CD4-positive, alpha-beta T cell (primary cell): ENCODE measurements at regions of chr2 and their contacts with region 1.

Region 1: GRCh38 chr2:151520976-151521375 is 111.3 kb downstream of the RIF1 start:
- DNase-seq: no peak
- ATAC-seq: no peak
- H3K4me3 ChIP-seq: no peak overlapping the region
- H3K4me3 Mint-ChIP-seq: no peak overlapping the region
- H3K27ac ChIP-seq: no peak overlapping the region
- H3K27ac Mint-ChIP-seq: no peak overlapping the region
- H3K4me1 ChIP-seq: no peaks in the 10 kb centered on the region
- H3K4me1 Mint-ChIP-seq: no peaks in the 10 kb centered on the region
- H3K27me3 ChIP-seq: no peaks in the 10 kb centered on the region
- H3K27me3 Mint-ChIP-seq: no peaks in the 10 kb centered on the region
- CTCF ChIP-seq: no peak

Region 2: GRCh38 chr2:151544449-151544848 is 23.5 kb after region 1 on chr2:
- CTCF ChIA-PET with region 1: no interaction called
- POLR2A ChIA-PET with region 1: no interaction called
- intact Hi-C with region 1: loop called in 1 of 2 experiments (anchors 1 kb)
- DNase-seq: no peak
- ATAC-seq: no peak
- H3K4me3 ChIP-seq: no peak overlapping the region
- H3K4me3 Mint-ChIP-seq: no peak overlapping the region
- H3K27ac ChIP-seq: no peak overlapping the region
- H3K27ac Mint-ChIP-seq: no peak overlapping the region
- H3K4me1 ChIP-seq: no peaks in the 10 kb centered on the region
- H3K4me1 Mint-ChIP-seq: no peaks in the 10 kb centered on the region
- H3K27me3 ChIP-seq: no peaks in the 10 kb centered on the region
- H3K27me3 Mint-ChIP-seq: no peaks in the 10 kb centered on the region
- CTCF ChIP-seq: no peak